HAP-1 (cell line): ENCODE measurements at regions of chrX and their contacts with region 1.

Region 1: GRCh38 chrX:133670383-133670782 is 255.1 kb upstream of the GPC4 start:
- DNase-seq: peak; percentile 60 to 69
- H3K4me3 ChIP-seq: no peak overlapping the region
- H3K4me1 ChIP-seq: peaks cover 19% of the 10 kb centered on the region
- H3K27me3 ChIP-seq: no peaks in the 10 kb centered on the region

Region 2: DNA sequence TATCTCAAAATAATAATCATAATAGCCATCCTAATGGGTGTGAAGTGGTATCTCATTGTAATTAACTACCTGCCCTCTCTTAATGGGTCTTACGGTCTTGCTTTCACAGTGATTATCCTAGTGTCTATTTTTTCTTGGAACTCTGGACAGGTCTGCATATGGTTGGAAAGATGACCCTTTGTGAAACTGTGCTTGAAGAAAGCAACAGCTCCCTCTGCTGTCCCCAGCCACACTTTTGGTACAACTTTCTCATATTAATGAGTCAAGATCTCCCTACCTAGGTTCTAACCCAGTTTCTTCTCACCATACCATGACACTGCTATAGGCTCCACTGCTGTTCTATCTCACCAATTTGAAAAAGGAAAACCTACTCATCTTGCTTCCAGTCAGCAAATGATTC is 454.6 kb before region 1 on chrX:
- in situ Hi-C with region 1: loop called (anchors 25 kb)
- DNase-seq: peak; percentile 61 to 72
- H3K4me3 ChIP-seq: no peak overlapping the region
- H3K4me1 ChIP-seq: no peaks in the 10 kb centered on the region
- H3K27me3 ChIP-seq: no peaks in the 10 kb centered on the region

Region 3: DNA sequence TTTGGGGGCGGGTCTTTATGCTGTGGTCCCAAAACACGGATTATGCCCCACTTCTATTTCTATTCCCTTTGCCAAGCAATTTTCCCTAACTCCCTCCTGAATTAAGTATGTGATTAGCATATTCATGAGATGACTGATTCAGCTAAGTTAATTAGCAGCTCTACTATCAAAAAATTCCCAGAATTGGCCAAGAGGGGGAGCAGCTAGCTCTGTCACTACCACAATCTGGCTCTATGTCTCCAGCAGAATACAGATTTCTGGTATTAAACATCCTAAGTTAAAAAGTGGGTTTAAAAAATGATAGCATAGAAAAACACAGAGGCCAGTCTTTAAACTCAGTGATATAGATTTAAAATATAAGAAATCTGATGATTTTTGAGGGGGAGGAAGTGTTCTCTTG is 335.4 kb before region 1 on chrX:
- in situ Hi-C with region 1: loop called (anchors 25 kb)
- DNase-seq: peak; percentile 55 to 69
- H3K4me3 ChIP-seq: no peak overlapping the region
- H3K4me1 ChIP-seq: peaks cover 35% of the 10 kb centered on the region
- H3K27me3 ChIP-seq: no peaks in the 10 kb centered on the region

Region 4: DNA sequence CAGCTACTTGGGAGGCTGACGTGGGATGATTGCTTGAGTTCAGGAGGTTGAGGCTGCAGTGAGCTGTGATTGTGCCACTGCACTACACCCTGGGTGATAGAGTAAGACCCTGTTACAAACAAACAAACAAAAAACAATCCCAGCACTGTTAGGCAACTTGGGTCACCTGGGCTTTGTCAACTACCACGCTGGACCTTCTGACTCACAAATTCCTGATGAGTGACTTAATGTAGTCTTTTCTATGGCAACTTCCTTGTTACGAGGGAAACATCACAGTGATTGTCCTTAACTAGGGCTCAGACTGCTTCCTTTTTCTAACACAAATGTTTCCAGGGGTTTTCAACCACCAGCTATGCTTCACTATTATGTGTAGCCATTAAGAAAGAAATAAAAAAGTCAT is 126.3 kb before region 1 on chrX:
- in situ Hi-C with region 1: no loop called
- DNase-seq: no peak
- H3K4me3 ChIP-seq: no peak overlapping the region
- H3K4me1 ChIP-seq: peaks cover 30% of the 10 kb centered on the region
- H3K27me3 ChIP-seq: no peaks in the 10 kb centered on the region

Region 5: GRCh38 chrX:133630362-133630761 is 40.0 kb before region 1 on chrX:
- in situ Hi-C with region 1: no loop called
- DNase-seq: no peak
- H3K4me3 ChIP-seq: no peak overlapping the region
- H3K4me1 ChIP-seq: peaks cover 31% of the 10 kb centered on the region
- H3K27me3 ChIP-seq: no peaks in the 10 kb centered on the region